ENCODE measurements at regions of chr21 and their contacts with region 1.

Region 1: GRCh38 chr21:26715878-26716506 is 129.2 kb downstream of the ADAMTS1 start:
- DNase-seq: no peak
- H3K4me3 ChIP-seq: no peak overlapping the region
- H3K27ac ChIP-seq: no peak overlapping the region
- H3K4me1 ChIP-seq: no peaks in the 10 kb centered on the region
- H3K27me3 ChIP-seq: peaks cover 0 to 4% (median 0%) of the 10 kb centered on the region in 4 donors
- CTCF ChIP-seq: peak; percentile 26 to 74 (median 58)
- POLR2A ChIP-seq: no peak

Region 2: DNA sequence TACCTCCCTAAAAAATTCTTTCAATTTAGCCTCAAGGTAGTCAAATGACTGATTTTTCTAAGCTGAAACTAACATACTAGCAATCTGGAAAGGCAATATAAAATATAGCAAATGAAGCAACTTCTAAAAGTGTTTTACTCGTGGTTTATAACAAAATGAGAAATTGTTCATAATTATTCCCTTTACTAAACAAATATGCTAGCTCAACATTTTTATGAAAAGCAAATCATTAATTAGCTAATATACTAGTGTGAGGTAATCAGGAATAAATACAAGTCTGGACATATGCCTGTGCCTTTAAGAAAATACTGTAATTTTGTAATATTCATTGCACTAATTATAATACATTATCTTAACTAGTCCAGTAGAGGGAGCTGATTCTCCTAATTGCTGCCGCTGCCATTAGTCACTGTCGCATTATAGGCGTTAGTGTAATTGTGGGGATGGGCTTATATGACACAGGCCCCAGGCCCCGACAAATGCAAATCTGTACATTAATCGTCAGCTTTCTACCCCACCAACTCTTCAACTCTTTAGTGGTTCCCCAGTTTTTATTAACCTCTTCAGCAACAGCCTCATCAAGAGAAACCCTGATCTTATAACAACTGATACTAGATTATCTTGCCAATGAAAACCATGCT is 820.3 kb before region 1 on chr21:
- intact Hi-C with region 1: loop called (anchors 10 kb)
- DNase-seq: no peak
- H3K4me3 ChIP-seq: no peak overlapping the region
- H3K27ac ChIP-seq: no peak overlapping the region
- H3K4me1 ChIP-seq: peaks cover 0 to 25% (median 6%) of the 10 kb centered on the region in 3 donors
- H3K27me3 ChIP-seq: no peaks in the 10 kb centered on the region
- CTCF ChIP-seq: peak; percentile 17 to 77 (median 58)
- POLR2A ChIP-seq: no peak

Region 3: DNA sequence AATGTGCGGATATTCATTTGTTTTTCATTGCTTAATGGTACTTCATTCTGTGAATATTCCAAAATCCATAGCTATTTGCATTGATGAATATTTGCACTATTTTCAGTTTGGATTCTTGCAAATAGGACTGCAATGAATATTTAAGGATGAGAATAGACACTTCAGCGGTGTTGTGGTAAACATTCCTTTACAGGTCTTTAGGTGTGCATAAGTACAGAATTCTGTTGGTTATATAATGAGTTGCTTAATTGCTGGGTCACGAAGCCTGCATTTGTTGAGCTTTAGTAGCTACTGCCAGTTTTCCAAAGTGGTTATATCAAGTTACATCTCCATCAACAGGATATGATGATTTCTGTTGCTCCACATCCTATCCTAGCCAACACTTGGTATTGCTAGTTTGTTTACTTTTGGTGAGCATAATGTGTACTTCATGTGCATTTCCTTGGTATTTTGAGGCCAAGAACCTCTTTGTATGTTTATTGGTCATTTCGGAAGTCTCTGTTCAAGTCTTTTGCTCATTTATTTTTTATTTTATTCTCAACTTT is 78.7 kb before region 1 on chr21:
- intact Hi-C with region 1: no loop called
- DNase-seq: no peak
- H3K4me3 ChIP-seq: no peak overlapping the region
- H3K27ac ChIP-seq: no peak overlapping the region
- H3K4me1 ChIP-seq: no peaks in the 10 kb centered on the region
- H3K27me3 ChIP-seq: no peaks in the 10 kb centered on the region
- CTCF ChIP-seq: no peak
- POLR2A ChIP-seq: no peak

Measured in esophagus squamous epithelium (tissue), 5 donors.